Heart left ventricle (tissue), 16 donors: ENCODE measurements at regions of chr3 and their contacts with region 1.

Region 1: GRCh38 chr3:44198284-44199269 is 43.1 kb upstream of the TOPAZ1 start:
- DNase-seq: peak in 4 of 5 donors; percentile 45 to 67 (median 58)
- ATAC-seq: peak in 3 of 4 donors; percentile 78 to 85 (median 85)
- H3K4me3 ChIP-seq: no peak overlapping the region
- H3K27ac ChIP-seq: no peak overlapping the region
- H3K4me1 ChIP-seq: no peaks in the 10 kb centered on the region
- H3K27me3 ChIP-seq: peaks cover 0 to 29% (median 0%) of the 10 kb centered on the region in 9 donors
- CTCF ChIP-seq: peak; percentile 69 to 86 (median 80)
- POLR2A ChIP-seq: no peak

Region 2: GRCh38 chr3:42961633-42962032 is 1236.9 kb before region 1 on chr3:
- intact Hi-C with region 1: loop called in 2 of 10 experiments (anchors 5 to 10 kb)
- DNase-seq: peak in 2 of 5 donors; percentile 16 to 29
- ATAC-seq: peak in 3 of 4 donors; percentile 49 to 68 (median 59)
- H3K4me3 ChIP-seq: no peak overlapping the region
- H3K27ac ChIP-seq: no peak overlapping the region
- H3K4me1 ChIP-seq: peaks cover 0 to 6% (median 0%) of the 10 kb centered on the region in 12 donors
- H3K27me3 ChIP-seq: no peaks in the 10 kb centered on the region
- CTCF ChIP-seq: peak; percentile 50 to 79 (median 65)
- POLR2A ChIP-seq: no peak

Region 3: GRCh38 chr3:43155464-43156121 is 1043.0 kb before region 1 on chr3:
- intact Hi-C with region 1: loop called in 1 of 10 experiments (anchors 10 kb)
- DNase-seq: peak; percentile 43 to 73 (median 66)
- ATAC-seq: peak; percentile 41 to 89 (median 82)
- H3K4me3 ChIP-seq: no peak overlapping the region
- H3K27ac ChIP-seq: no peak overlapping the region
- H3K4me1 ChIP-seq: peaks cover 0 to 12% (median 0%) of the 10 kb centered on the region in 12 donors
- H3K27me3 ChIP-seq: no peaks in the 10 kb centered on the region
- CTCF ChIP-seq: peak; percentile 18 to 71 (median 56)
- POLR2A ChIP-seq: no peak

Region 4: GRCh38 chr3:43676441-43676840 is 522.1 kb before region 1 on chr3:
- intact Hi-C with region 1: loop called in 1 of 10 experiments (anchors 10 kb)
- DNase-seq: no peak
- ATAC-seq: no peak
- H3K4me3 ChIP-seq: no peak overlapping the region
- H3K27ac ChIP-seq: no peak overlapping the region
- H3K4me1 ChIP-seq: no peaks in the 10 kb centered on the region
- H3K27me3 ChIP-seq: no peaks in the 10 kb centered on the region
- CTCF ChIP-seq: no peak
- POLR2A ChIP-seq: no peak

Region 5: DNA sequence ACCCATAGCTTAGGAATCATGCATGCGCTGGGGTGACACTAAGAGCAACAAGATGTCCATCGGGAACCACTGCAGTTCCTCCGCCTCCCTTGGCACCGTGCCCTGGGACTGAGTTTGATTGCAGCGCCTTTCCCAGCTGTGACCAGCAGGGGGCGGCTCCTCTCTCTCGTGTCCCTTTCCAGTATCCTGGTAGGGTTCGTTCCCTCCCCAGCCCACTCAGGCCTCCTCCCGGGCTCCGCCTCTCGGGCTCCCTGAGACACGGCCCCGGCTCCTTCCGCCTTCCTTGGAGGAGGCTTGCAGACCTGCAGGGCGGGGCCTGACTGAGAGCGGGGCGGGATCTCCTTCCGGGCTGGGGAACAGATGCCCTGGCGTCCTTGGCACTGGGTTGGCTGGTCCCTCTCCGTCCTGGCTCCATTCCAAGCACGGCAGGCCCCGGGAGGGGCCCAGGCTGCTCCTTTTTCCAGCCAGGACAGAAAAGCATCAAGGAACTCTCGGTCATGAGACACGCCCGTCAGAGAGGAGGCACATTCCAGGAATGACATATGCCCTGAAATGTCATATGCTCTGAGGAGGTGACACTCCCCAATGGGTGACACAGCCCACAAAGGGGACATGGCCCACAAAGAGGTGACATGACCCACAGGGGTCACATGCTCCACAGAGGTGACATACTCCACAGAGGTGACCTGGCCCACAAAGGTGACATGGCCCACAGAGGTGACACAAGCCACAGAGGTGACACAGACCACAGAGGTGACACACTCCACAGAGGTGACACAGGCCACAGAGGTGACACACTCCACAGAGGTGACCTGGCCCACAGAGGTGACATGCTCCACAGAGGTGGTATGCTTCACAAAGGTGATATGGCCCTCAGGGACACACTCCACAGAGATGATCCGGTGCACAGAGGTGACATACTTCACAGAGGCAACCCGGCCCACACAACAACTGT is 428.8 kb before region 1 on chr3:
- intact Hi-C with region 1: loop called in 6 of 10 experiments (anchors 2 to 10 kb)
- DNase-seq: peak; percentile 94 to 98 (median 97)
- ATAC-seq: peak; percentile 86 to 94 (median 92)
- H3K4me3 ChIP-seq: peak overlapping the region in 10 of 12 donors; percentile 10 to 55 (median 46)
- H3K27ac ChIP-seq: peak overlapping the region; percentile 31 to 90 (median 86)
- H3K4me1 ChIP-seq: peaks cover 0 to 55% (median 30%) of the 10 kb centered on the region in 12 donors
- H3K27me3 ChIP-seq: no peaks in the 10 kb centered on the region
- CTCF ChIP-seq: peak; percentile 90 to 99 (median 95)
- POLR2A ChIP-seq: peak in 1 of 2 donors; percentile 20

Region 6: DNA sequence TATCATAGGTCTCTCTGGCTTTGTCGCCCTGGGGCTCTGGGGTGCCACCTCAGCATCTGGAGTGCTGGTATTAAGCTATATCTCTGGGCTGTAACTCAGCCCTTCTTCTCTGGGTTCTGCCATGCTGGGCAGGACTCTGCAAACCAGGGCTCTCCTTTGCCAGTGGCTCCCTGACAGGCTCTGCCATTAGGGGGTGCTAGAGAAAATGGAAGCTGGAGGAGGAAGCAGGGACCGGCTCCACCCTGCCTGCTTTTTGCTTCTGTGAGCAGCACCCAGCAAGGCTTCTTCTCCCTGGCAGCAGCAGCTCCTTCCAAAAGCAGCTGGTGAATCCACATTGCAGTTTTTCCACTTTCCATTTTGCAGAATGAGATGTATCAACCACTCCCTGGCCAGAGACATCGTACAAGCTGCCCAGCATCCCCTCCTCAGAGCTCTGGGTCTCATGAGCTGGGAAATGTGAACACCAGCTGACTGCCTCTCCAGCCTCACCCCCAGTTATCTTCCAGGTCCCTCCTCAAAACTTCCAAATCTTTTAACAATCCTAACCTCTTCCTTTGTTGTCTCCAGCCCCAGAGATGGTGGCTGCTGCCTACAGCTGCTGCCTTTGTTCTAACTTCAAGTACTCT is 342.8 kb before region 1 on chr3:
- intact Hi-C with region 1: loop called in 4 of 10 experiments (anchors 5 to 10 kb)
- DNase-seq: peak in 4 of 5 donors; percentile 30 to 58 (median 43)
- ATAC-seq: peak; percentile 75 to 87 (median 82)
- H3K4me3 ChIP-seq: no peak overlapping the region
- H3K27ac ChIP-seq: no peak overlapping the region
- H3K4me1 ChIP-seq: no peaks in the 10 kb centered on the region
- H3K27me3 ChIP-seq: peaks cover 0 to 51% (median 15%) of the 10 kb centered on the region in 9 donors
- CTCF ChIP-seq: peak; percentile 37 to 67 (median 54)
- POLR2A ChIP-seq: no peak

Region 7: DNA sequence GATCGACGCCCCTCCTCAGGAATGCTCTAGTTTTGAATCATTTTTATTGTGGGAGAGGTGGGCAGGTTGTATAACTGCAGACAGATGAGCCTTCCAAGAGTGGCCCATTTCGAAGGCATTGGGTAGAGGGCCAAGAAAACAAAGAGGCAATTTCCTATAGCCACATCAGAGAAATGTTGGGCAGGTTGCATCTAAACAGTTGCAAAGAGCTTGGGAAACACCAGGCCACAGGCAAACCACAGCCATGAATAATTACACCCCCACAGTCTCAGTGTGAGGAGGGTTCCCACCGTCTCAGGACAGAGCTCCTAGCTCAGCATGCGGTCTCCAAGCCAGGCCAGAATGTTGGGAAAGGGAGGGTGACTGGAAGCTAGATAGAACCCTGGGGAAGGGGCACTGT is 250.6 kb before region 1 on chr3:
- intact Hi-C with region 1: no loop called
- DNase-seq: no peak
- ATAC-seq: no peak
- H3K4me3 ChIP-seq: no peak overlapping the region
- H3K27ac ChIP-seq: no peak overlapping the region
- H3K4me1 ChIP-seq: no peaks in the 10 kb centered on the region
- H3K27me3 ChIP-seq: peaks cover 0 to 46% (median 0%) of the 10 kb centered on the region in 9 donors
- CTCF ChIP-seq: no peak
- POLR2A ChIP-seq: no peak

Region 8: GRCh38 chr3:44612678-44613077 is 414.1 kb after region 1 on chr3:
- intact Hi-C with region 1: no loop called
- DNase-seq: no peak
- ATAC-seq: no peak
- H3K4me3 ChIP-seq: no peak overlapping the region
- H3K27ac ChIP-seq: no peak overlapping the region
- H3K4me1 ChIP-seq: no peaks in the 10 kb centered on the region
- H3K27me3 ChIP-seq: no peaks in the 10 kb centered on the region
- CTCF ChIP-seq: no peak
- POLR2A ChIP-seq: no peak